A549 (cell line): ENCODE measurements at regions of chr11 and their contacts with region 1.

Region 1: GRCh38 chr11:57249384-57250319 is 12.6 kb upstream of the APLNR start:
- DNase-seq: peak; percentile 31 to 68
- ATAC-seq: peak; percentile 70 to 81
- H3K4me3 ChIP-seq: no peak overlapping the region
- H3K27ac ChIP-seq: peak overlapping the region; percentile 89 to 90
- H3K4me1 ChIP-seq: peaks cover 11% of the 10 kb centered on the region
- CTCF ChIP-seq: peak; percentile 97
- EP300 ChIP-seq: no peak
- POLR2A ChIP-seq: no peak
- RAD21 ChIP-seq: peak; percentile 93 to 95

Region 2: DNA sequence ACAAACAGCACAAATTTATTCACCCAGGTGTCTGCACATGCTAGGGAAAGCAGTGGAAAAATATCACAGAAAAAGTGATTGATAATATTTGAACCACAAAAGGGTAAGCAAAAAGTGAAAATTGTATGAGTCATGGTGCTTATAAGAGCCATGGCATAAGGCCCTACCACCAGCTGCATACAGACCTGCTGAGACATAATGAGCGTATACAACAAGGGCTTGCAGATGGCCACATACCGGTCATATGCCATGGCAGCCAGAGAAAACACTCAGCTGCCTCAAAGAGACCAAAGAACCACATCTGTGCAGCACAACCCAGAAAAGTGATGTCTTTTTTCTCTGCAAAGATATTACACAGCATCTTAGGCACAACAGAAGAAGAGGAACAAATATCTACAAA is 429.7 kb before region 1 on chr11:
- CTCF ChIA-PET with region 1: interaction called, 22 read pairs
- POLR2A ChIA-PET with region 1: no interaction called
- DNase-seq: no peak
- ATAC-seq: no peak
- H3K4me3 ChIP-seq: no peak overlapping the region
- H3K27ac ChIP-seq: no peak overlapping the region
- H3K4me1 ChIP-seq: no peaks in the 10 kb centered on the region
- CTCF ChIP-seq: no peak
- EP300 ChIP-seq: no peak
- POLR2A ChIP-seq: no peak
- RAD21 ChIP-seq: no peak

Region 3: DNA sequence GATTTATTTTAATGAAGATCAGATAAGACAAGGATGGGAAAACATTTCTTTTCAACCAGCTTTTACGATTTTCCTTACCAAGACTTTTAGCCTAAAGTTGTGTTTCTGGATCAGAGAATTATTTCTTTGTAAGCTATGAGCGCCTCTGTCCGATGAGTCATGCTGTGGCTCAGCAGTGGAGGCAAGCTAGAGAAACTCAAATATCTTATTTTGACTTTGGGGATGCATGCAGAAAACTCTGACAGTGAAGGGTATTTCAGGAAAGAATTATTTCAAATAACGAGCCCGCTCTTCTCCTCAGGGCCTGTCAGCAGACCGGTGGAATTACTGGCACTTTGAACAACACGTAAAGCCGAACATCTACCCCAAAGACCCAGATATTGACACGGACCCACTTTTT is 338.9 kb before region 1 on chr11:
- CTCF ChIA-PET with region 1: interaction called, 44 read pairs
- POLR2A ChIA-PET with region 1: interaction called, 15 read pairs
- DNase-seq: peak; percentile 49 to 78
- ATAC-seq: peak; percentile 66 to 72
- H3K4me3 ChIP-seq: peak overlapping the region; percentile 13; the same call in 1 of the 3 replicates
- H3K27ac ChIP-seq: peak overlapping the region; percentile 95 to 100
- H3K4me1 ChIP-seq: peaks cover 48% of the 10 kb centered on the region
- CTCF ChIP-seq: no peak
- EP300 ChIP-seq: no peak
- POLR2A ChIP-seq: no peak
- RAD21 ChIP-seq: peak in 1 of 2 experiments; percentile 28; a peak in 2 of 5 replicates

Region 4: DNA sequence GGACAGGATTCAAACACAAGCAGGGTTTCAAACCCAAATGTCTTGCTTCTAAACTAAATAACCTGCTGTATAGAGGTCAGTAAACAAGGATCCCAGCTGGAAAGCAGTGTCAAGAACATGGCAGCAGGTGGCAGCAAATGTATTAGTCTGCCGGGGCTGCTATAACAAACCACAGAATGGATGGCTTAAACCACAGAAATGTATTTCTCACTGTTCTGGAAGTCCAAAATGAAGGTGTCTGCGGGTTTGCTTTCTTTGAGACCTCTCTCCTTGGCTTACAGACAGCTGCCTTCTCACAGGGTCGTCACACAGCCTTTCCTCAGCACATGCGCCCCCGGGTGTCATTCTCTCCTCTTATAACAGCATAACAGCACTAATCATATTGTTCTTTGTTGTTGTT is 133.0 kb before region 1 on chr11:
- CTCF ChIA-PET with region 1: interaction called, 18 read pairs
- POLR2A ChIA-PET with region 1: no interaction called
- DNase-seq: peak; percentile 13 to 54
- ATAC-seq: peak in 1 of 2 experiments; percentile 78; a peak in 2 of 6 replicates
- H3K4me3 ChIP-seq: no peak overlapping the region
- H3K27ac ChIP-seq: peak overlapping the region; percentile 18 to 56; a peak in 4 of 6 replicates
- H3K4me1 ChIP-seq: no peaks in the 10 kb centered on the region
- CTCF ChIP-seq: peak; percentile 39
- EP300 ChIP-seq: no peak
- POLR2A ChIP-seq: no peak
- RAD21 ChIP-seq: peak; percentile 55 to 67

Region 5: DNA sequence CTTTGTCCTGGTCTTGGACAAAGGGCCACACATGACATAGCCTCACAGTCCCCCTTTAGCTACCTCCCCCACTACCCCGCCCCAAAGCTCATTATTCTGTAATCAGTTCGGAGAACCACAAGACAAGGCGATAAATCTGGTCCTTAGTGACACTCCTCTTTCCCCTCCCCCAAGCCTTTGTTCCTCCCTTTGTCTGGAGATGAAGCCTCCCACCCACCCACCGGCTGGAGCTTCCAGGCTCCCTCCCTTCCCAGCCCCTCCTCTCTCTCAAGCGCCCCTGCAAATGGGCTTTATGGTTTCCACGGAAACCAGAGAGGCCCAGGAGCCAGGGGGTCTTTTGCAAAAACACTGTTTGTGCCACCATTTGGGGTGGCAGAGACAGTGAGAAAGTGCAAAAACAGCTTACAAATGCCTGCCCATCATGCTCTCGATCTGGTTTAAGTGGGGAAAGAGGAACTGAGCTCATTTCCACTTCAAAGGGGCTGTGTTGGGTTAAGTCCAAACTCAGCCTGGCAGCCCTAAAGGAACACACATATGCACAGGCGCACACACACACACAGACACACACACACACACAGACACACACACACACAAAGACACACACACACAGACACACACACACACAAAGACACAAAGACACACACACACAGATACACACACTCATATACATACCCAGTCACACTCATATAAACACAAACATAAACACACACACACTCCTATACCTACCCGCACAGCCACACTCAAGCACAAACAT is 36.1 kb before region 1 on chr11:
- CTCF ChIA-PET with region 1: interaction called, 14 read pairs
- POLR2A ChIA-PET with region 1: no interaction called
- DNase-seq: no peak
- ATAC-seq: no peak
- H3K4me3 ChIP-seq: no peak overlapping the region
- H3K27ac ChIP-seq: peak overlapping the region in 1 of 2 experiments; percentile 67; a peak in 4 of 6 replicates
- H3K4me1 ChIP-seq: peaks cover 14% of the 10 kb centered on the region
- CTCF ChIP-seq: no peak
- EP300 ChIP-seq: no peak
- POLR2A ChIP-seq: no peak
- RAD21 ChIP-seq: no peak

Region 6: DNA sequence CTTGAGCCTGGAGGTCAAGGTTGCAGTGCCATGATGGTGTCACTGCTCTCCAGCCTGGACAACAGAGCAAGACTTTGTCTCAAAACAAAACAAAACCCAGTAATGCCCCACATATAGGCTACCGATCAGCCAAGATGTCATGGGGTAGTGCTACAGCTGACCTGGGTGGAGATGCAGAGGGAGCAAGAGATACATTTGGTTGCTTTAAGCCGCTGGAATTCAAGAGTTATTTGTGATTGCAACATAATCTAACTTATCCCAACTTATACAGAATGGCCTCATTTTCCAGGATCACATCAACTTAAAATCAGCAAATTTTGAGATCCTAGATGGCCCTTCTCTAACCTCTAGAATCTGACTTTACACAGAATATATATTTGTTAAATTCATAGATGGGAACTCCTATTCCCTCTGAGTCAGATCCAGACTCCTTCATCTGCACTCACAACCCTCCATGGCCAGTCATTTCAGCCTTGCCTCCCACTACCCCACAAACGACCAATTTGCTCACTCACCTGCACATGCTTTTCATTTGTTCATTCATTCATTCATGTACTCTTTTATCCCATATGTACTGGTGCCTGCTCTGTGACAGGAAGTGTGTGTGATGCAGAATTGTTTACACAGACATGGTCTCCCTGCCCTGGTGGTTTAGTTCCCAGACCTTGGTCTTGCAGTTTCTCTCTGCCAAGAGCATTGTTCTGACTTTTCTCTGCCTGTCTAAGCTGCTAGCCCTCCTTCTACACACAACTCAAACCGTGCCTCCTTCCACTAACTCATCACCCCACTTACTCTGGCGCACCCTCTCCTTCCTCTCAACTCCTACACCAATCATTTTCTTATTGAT is 11.5 kb after region 1 on chr11:
- CTCF ChIA-PET with region 1: interaction called, 26 read pairs
- POLR2A ChIA-PET with region 1: no interaction called
- DNase-seq: no peak
- ATAC-seq: no peak
- H3K4me3 ChIP-seq: no peak overlapping the region
- H3K27ac ChIP-seq: no peak overlapping the region
- H3K4me1 ChIP-seq: no peaks in the 10 kb centered on the region
- CTCF ChIP-seq: no peak
- EP300 ChIP-seq: no peak
- POLR2A ChIP-seq: no peak
- RAD21 ChIP-seq: no peak

Region 7: DNA sequence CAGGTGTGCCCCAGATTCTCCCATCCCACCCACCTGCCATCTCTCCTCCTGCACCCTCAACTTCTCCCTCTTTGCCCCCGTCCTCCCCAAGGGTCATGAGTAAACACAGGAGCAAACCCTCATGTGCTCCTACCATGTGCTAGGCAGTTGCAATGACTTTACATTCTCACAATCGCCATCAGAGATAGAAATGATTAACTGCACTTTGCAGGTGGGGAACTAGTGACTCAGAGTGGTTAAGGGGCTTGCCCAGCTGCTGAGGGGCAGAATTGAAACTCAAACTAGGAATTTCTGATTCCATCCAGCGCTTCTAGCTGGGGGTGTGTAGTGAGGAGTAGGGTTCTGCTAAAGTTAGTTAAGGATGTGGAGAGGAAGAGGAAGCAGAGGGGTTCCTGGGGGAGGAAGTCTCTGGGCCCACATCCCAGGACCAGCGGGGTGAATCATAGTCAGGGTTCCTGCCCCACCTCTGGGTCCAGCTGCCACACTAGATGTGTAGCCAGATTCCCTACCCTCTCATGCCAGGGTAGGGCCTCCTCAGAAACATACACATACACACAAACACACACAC is 156.8 kb after region 1 on chr11:
- CTCF ChIA-PET with region 1: no interaction called
- POLR2A ChIA-PET with region 1: no interaction called
- DNase-seq: no peak
- ATAC-seq: no peak; a peak in 2 of 6 replicates
- H3K4me3 ChIP-seq: no peak overlapping the region
- H3K27ac ChIP-seq: peak overlapping the region; percentile 7 to 72; a peak in 4 of 6 replicates
- H3K4me1 ChIP-seq: peaks cover 33% of the 10 kb centered on the region
- CTCF ChIP-seq: no peak
- EP300 ChIP-seq: no peak
- POLR2A ChIP-seq: no peak
- RAD21 ChIP-seq: no peak

Region 8: GRCh38 chr11:57444362-57445121 is 194.9 kb after region 1 on chr11:
- CTCF ChIA-PET with region 1: no interaction called
- POLR2A ChIA-PET with region 1: no interaction called
- DNase-seq: peak; percentile 61 to 93
- ATAC-seq: peak; percentile 84 to 87
- H3K4me3 ChIP-seq: no peak overlapping the region
- H3K27ac ChIP-seq: peak overlapping the region; percentile 80 to 85
- H3K4me1 ChIP-seq: peaks cover 54% of the 10 kb centered on the region
- CTCF ChIP-seq: no peak
- EP300 ChIP-seq: peak; percentile 78 to 85; a peak in 3 of 5 replicates
- POLR2A ChIP-seq: no peak
- RAD21 ChIP-seq: peak in 1 of 2 experiments; percentile 9; a peak in 2 of 5 replicates